HCT116 (cell line): ENCODE measurements at regions of chr5 and their contacts with region 1.

Region 1: DNA sequence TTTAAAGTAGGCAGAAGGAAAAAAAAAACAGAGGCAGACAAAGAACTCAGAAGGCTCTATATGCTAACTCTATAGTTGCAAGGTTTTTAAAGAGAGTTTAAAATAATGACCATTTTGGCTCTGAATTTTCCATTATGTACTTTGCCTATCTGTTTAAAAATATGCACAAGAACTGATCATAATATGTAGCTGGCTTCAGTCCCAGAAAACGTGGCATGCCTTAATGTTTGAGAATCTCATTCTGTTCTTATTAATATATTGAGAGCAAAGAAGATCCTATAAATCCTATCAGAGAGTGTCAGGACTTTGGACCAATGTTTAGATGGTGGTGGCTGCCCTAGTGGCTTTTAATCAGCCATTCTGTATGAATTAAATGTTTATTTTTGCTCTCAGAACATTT is 121.5 kb downstream of the JMY start:
- DNase-seq: no peak
- ATAC-seq: no peak
- H3K4me3 ChIP-seq: no peak overlapping the region
- H3K27ac ChIP-seq: no peak overlapping the region
- H3K4me1 ChIP-seq: no peaks in the 10 kb centered on the region
- H3K27me3 ChIP-seq: no peaks in the 10 kb centered on the region
- CTCF ChIP-seq: no peak
- POLR2A ChIP-seq: no peak
- RAD21 ChIP-seq: no peak

Region 2: GRCh38 chr5:79396265-79396664 is 38.9 kb after region 1 on chr5:
- CTCF ChIA-PET with region 1: no interaction called
- POLR2A ChIA-PET with region 1: no interaction called
- RAD21 ChIA-PET with region 1: no interaction called
- intact Hi-C with region 1: no loop called
- DNase-seq: no peak
- ATAC-seq: no peak
- H3K4me3 ChIP-seq: no peak overlapping the region
- H3K27ac ChIP-seq: no peak overlapping the region
- H3K4me1 ChIP-seq: no peaks in the 10 kb centered on the region
- H3K27me3 ChIP-seq: no peaks in the 10 kb centered on the region
- CTCF ChIP-seq: no peak
- POLR2A ChIP-seq: no peak
- RAD21 ChIP-seq: no peak

Region 3: DNA sequence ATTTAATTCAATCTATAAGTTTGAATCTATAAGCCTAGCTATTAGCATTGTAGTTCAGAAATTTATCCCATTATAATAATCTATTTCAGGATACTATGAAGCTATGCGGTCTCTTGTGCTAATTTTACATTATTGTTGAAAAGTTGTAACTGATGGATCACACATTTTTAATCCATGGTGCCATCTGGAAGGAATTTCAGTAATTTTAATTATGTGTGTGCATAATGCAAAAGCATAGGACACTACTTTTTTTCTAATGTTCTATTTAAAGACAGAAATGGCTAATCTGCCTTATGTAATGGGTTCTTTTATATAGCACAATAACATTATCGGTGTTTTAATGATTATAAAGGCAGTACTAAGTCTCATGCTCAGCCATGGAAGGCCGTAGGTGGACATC is 65.9 kb after region 1 on chr5:
- CTCF ChIA-PET with region 1: no interaction called
- POLR2A ChIA-PET with region 1: no interaction called
- RAD21 ChIA-PET with region 1: no interaction called
- intact Hi-C with region 1: loop called (anchors 10 kb)
- DNase-seq: no peak
- ATAC-seq: no peak
- H3K4me3 ChIP-seq: no peak overlapping the region
- H3K27ac ChIP-seq: no peak overlapping the region
- H3K4me1 ChIP-seq: peaks cover 12 to 53% of the 10 kb centered on the region in 2 experiments
- H3K27me3 ChIP-seq: no peaks in the 10 kb centered on the region
- CTCF ChIP-seq: no peak
- POLR2A ChIP-seq: no peak
- RAD21 ChIP-seq: no peak

Region 4: GRCh38 chr5:79560771-79561524 is 203.6 kb after region 1 on chr5:
- CTCF ChIA-PET with region 1: no interaction called
- POLR2A ChIA-PET with region 1: no interaction called
- RAD21 ChIA-PET with region 1: no interaction called
- intact Hi-C with region 1: no loop called
- DNase-seq: no peak
- ATAC-seq: no peak
- H3K4me3 ChIP-seq: no peak overlapping the region
- H3K27ac ChIP-seq: no peak overlapping the region
- H3K4me1 ChIP-seq: peaks cover 0 to 12% of the 10 kb centered on the region in 2 experiments; a peak in 1 of 4 replicates
- H3K27me3 ChIP-seq: no peaks in the 10 kb centered on the region
- CTCF ChIP-seq: no peak
- POLR2A ChIP-seq: no peak
- RAD21 ChIP-seq: no peak